ENCODE measurements at regions of chr16 and their contacts with region 1.

Region 1: DNA sequence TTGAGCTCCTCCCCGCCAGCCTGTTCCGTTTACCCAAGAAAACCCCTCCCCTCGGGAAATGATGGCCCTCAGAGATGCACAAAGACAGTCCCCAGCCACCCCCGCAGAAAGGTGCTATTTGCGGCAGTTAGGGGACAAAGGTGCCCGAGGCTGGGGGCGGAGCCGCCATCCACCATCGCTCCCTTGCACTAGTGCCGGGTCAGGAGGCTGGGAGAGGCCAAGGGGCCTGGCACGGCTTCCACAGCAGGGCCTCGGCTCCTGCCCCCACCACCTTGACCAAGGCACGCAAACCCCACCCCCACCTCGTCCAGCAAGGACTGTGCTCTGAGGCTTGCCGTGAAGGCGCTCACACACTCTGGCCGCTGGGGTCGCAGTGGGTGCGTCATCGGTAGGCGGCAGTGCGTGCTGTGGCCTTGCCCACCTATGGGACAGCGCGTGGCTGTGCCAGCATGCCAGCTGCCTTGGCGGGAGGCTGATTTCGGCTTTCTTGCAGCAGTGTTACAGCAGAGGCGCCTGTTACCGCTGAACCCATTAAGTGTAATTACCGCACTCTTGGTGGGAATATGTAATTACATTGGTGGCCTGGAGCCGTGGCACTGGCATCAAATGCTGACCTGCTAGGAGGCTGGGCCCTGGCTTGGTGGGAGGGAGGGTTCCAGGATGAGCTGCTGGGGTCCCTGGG is 31.8 kb downstream of the TPSG1 start:
- DNase-seq: peak; percentile 65
- H3K4me3 Mint-ChIP-seq: no peak overlapping the region
- H3K27ac Mint-ChIP-seq: no peak overlapping the region
- H3K4me1 Mint-ChIP-seq: no peaks in the 10 kb centered on the region
- H3K27me3 Mint-ChIP-seq: peaks cover 74% of the 10 kb centered on the region
- CTCF ChIP-seq: no peak

Region 2: DNA sequence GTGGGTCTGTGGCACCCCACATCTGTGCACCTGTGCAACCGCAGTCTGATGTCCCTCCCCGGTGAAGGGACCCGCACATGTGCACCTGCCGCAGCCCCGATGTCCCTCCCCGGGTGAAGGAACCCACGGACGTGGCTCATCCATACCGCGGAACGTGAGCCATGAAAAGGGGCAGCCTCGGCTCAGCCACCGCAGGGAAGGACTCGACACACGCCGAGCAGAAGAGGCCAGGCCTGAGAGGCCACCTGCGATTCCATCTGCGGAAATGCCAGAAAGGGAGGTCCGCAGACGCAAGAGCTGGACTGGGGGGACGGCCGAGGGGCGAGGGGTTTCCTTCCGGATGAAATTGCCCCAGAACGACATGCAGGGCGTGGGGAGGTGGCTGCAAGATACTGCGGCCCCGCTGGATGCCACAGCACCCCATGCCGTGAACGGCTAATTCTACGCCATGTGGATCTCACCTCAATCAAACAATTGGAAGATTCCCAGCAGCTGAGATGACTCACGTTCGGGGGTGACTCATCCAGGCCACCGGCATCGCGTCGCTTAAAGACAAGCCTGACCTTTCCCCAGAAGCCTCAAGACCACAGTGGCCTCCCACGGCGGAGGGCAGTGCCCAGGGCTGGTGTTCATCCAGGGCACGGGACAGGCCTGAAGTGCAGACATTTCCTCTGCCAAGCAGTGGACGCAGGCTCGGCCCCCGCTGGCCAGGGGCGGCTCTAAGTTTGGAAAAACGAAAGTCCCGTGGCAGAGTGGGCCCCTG is 190.7 kb before region 1 on chr16:
- CTCF ChIA-PET with region 1: no interaction called
- intact Hi-C with region 1: no loop called
- DNase-seq: peak; percentile 90
- H3K4me3 Mint-ChIP-seq: peak overlapping the region; percentile 13
- H3K27ac Mint-ChIP-seq: peak overlapping the region; percentile 52
- H3K4me1 Mint-ChIP-seq: peaks cover 14% of the 10 kb centered on the region
- H3K27me3 Mint-ChIP-seq: peaks cover 65% of the 10 kb centered on the region
- CTCF ChIP-seq: no peak

Region 3: DNA sequence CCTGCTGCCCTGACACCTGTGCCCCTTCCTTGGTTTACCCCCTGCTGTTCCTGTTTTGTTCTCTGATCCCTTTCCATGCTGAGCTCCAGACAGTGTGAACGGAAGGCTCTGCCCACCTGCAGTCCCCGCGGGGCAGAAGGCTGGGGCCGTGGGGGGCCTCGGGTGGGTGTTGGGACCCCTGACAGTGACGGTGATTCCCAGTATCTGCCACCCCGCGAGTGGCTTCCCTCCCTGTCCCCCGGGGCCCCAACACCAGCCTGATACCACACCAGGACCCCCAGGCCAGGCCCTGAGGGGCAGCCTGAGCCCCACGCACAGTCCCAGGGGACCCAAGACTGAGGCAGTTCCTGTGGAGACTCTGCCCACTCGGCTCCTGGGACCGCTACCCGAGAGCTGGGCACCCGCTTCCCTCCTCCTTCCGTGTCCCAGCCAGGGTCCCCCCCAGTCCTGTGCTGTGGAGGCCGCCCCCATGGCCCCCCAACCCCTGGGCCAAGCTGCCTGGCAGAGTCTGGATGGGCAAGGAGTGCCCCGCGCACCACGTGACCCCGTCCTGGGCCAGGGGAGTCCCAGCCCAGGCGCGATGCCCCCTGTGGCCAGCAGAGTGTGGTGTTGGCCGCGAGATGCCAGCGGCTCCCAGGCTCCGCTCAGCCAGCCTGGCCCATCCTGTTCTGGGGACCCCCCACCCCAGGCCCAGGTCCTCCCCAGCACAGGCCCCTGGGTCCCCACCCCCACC is 87.2 kb before region 1 on chr16:
- CTCF ChIA-PET with region 1: interaction called, 6 read pairs
- intact Hi-C with region 1: loop called (anchors 2 kb)
- DNase-seq: peak; percentile 91
- H3K4me3 Mint-ChIP-seq: no peak overlapping the region
- H3K27ac Mint-ChIP-seq: no peak overlapping the region
- H3K4me1 Mint-ChIP-seq: no peaks in the 10 kb centered on the region
- H3K27me3 Mint-ChIP-seq: peaks cover 84% of the 10 kb centered on the region
- CTCF ChIP-seq: peak; percentile 94

Measured in Calu3 (cell line).